ENCODE measurements at regions of chrX and their contacts with region 1.

Region 1: DNA sequence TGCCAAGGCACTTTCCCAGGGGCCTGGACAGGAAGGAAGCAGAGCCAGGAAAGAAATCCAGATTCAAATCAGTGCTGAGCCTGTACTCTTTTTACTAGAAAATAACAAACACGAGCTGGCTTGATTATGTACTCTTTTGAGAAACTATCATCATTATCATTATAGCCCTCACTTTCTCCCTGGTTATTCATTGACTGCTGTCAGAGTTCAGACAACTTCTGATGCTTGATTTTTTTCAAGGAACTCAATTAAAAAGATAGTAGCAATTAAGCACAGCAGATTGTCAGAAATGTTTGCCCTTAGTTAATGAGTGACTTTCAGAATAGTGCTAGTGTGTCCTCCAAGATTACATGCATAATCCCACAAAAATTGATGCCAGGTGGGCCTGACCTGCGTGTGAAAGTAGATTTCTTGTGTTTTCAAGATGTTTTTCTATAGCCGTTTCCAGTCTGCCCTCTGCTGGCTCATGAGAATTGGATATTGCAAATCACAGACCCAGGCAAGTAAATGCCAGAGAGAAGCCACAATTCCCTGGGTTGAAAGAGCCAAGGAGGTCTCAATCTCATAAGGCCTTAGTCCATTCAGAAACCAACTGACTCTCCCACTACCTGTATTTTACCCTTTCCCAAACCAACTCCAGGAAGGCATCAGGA is 14.3 kb upstream of the PNPLA4 start:
- DNase-seq: no peak
- ATAC-seq: no peak

Region 2: GRCh38 chrX:6849716-6850414 is 1091.7 kb before region 1 on chrX:
- intact Hi-C with region 1: no loop called
- DNase-seq: no peak
- ATAC-seq: no peak

Region 3: GRCh38 chrX:6924443-6925077 is 1017.0 kb before region 1 on chrX:
- intact Hi-C with region 1: loop called (anchors 5 kb)
- DNase-seq: no peak
- ATAC-seq: no peak

Region 4: DNA sequence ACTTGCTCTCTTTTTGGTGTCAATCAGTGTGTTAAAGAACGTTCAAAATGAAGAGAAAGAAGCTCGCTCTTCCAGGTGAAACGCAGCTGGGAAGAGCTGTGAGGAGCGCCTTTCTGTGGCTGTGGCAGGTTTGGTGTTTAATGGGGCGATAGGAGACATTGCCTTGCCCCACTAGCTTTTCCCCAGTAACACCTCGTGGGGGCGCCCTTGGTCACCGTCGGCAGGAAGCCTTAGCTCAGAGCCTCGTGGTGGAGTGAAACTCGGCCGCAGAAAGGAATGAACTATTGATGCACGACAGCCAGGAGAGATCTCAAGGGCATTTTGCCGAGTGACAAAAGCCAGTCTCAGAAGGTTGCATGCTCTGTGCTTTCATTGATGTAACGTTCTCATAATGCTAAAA is 1759.0 kb after region 1 on chrX:
- intact Hi-C with region 1: no loop called
- DNase-seq: no peak
- ATAC-seq: no peak